Esophagus squamous epithelium (tissue), 5 donors: ENCODE measurements at regions of chr9 and their contacts with region 1.

Region 1: DNA sequence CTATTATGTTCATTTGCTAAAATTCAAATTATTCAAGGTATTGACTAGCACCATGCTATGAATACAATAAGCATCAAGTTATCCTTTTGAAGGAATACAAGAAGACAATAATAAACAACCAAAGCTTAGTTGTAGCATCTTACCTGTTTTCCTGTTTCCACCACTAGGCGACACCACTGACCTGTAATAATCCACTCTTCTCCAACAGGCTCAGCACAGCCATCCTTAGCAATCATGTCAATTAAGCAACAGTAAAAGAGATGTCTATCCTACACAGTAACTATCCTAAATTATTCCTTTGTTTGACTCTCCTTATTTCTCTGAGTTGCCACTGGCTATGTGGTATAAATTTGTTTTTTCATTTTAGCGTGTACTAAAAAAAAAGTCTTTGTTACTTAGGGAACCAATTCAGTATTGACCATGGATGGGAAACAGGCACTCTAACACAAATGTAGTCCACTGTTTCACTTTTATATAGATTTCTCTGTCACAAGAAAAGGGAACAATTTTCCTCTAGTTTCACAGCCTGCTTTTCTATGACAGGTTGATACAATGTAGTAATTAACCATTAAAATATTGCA is 46.2 kb downstream of the PCA3 start:
- DNase-seq: no peak
- H3K4me3 ChIP-seq: no peak overlapping the region
- H3K27ac ChIP-seq: no peak overlapping the region
- H3K4me1 ChIP-seq: peaks cover 0 to 8% (median 0%) of the 10 kb centered on the region in 3 donors
- H3K27me3 ChIP-seq: peaks cover 0 to 12% (median 0%) of the 10 kb centered on the region in 4 donors
- CTCF ChIP-seq: peak; percentile 57 to 89 (median 70)
- POLR2A ChIP-seq: no peak

Region 2: DNA sequence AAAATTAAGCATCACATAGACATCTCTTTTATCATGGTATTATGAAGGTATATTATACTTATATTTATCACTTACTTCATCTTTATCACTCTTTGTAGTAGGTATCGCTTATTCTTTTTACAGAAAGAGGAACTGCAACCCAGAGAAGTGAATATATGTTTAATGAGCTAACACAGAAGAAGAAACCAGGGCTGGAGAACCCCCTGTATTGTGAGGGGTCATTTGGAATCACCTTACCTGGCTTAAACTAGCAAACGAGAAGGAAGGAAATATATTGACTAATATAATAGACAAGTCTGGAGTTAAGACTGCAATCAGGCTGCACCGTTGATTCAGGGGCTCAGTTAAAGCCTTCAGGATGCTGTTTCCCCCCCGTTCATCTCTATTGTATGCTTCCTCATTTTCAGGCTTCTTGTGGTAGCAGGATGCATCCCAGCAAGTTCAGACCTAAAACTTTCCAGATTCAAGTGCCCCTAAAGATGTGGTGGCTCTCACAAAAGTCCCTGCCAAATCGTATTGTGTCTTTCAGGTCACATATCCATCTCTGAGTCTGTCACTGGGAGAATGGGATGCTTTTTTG is 205.1 kb before region 1 on chr9:
- intact Hi-C with region 1: no loop called
- DNase-seq: no peak
- H3K4me3 ChIP-seq: no peak overlapping the region
- H3K27ac ChIP-seq: no peak overlapping the region
- H3K4me1 ChIP-seq: no peaks in the 10 kb centered on the region
- H3K27me3 ChIP-seq: peaks cover 0 to 7% (median 0%) of the 10 kb centered on the region in 4 donors
- CTCF ChIP-seq: no peak
- POLR2A ChIP-seq: no peak

Region 3: DNA sequence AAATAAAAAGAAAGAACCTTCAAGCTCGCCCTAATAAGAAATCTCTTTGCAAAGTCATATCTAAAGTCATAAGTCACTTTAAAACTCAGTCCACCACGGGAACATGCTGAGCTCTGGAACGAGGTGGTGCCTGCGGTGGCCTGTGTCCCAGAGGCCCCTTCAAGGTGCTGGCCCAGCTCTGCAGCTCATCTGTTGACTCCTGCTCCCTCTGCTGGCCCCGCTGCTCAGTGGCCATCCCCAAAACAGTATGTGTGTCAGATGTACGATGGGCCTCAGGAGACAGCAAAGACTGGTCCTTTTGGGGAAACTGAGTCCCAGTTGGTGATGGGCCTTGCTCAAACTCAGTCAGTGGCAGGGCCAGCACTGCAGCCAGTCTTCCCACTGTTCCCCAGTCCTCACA is 186.2 kb after region 1 on chr9:
- intact Hi-C with region 1: loop called (anchors 10 kb)
- DNase-seq: no peak
- H3K4me3 ChIP-seq: no peak overlapping the region
- H3K27ac ChIP-seq: no peak overlapping the region
- H3K4me1 ChIP-seq: no peaks in the 10 kb centered on the region
- H3K27me3 ChIP-seq: peaks cover 0 to 22% (median 0%) of the 10 kb centered on the region in 4 donors
- CTCF ChIP-seq: peak in 5 of 6 experiments; percentile 7 to 34 (median 23)
- POLR2A ChIP-seq: no peak